HepG2 (cell line): ENCODE measurements at regions of chr3 and their contacts with region 1.

Region 1: GRCh38 chr3:185328324-185329004 is 34.5 kb upstream of the MAP3K13 start:
- DNase-seq: peak; percentile 94
- ATAC-seq: peak; percentile 96
- H3K4me3 ChIP-seq: peak overlapping the region; percentile 64 to 76 (median 68)
- H3K27ac ChIP-seq: peak overlapping the region; percentile 92
- H3K4me1 ChIP-seq: peaks cover 66% of the 10 kb centered on the region
- H3K27me3 ChIP-seq: no peaks in the 10 kb centered on the region
- CTCF ChIP-seq: no peak
- EP300 ChIP-seq: peak in 1 of 2 experiments; percentile 58; a peak in 1 of 4 replicates
- POLR2A ChIP-seq: peak; percentile 90 to 97
- RAD21 ChIP-seq: no peak

Region 2: DNA sequence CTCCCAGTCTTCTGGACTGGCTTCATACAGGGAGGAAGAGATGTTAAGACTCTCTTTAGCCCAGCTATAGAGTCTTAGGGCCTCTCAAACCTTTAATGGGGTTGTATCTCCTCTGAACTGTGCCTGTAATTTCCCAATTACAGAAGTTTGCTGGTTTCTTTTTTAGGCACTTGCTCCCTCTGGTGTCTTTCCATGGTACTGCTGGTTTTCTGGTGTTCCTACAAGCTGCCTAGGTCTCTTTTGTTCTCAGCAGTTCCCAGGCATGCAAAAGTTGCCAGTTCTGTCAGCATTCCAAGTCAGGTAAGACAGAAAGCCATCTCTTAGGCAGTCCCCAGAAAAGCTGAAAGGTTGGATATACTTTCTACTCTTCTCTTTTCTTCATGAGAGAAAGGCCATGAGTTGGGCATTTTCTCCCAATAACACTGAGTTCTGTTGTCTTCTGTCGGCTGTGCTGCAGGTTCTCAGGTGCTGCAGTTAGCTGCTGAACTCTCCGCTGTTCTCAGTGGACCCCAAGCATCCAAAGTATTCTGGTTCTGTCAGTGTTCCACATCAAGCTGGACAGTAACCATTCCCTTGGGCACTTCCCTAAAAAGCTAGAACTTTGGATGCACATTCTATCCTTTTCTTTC is 20.2 kb before region 1 on chr3:
- CTCF ChIA-PET with region 1: no interaction called
- POLR2A ChIA-PET with region 1: interaction called, 24 read pairs
- in situ Hi-C with region 1: no loop called
- intact Hi-C with region 1: no loop called
- DNase-seq: peak; percentile 71
- ATAC-seq: peak; percentile 78
- H3K4me3 ChIP-seq: no peak overlapping the region; a peak in 1 of 6 replicates
- H3K27ac ChIP-seq: peak overlapping the region; percentile 85
- H3K4me1 ChIP-seq: peaks cover 35% of the 10 kb centered on the region
- H3K27me3 ChIP-seq: no peaks in the 10 kb centered on the region
- CTCF ChIP-seq: peak; percentile 77
- EP300 ChIP-seq: no peak
- POLR2A ChIP-seq: no peak
- RAD21 ChIP-seq: peak; percentile 48; the same call in 1 of the 2 replicates

Region 3: GRCh38 chr3:185318141-185318540 is 10.3 kb before region 1 on chr3:
- CTCF ChIA-PET with region 1: no interaction called
- POLR2A ChIA-PET with region 1: interaction called, 10 read pairs
- in situ Hi-C with region 1: no loop called
- intact Hi-C with region 1: no loop called
- DNase-seq: peak; percentile 55
- ATAC-seq: peak; percentile 66
- H3K4me3 ChIP-seq: no peak overlapping the region
- H3K27ac ChIP-seq: peak overlapping the region; percentile 33
- H3K4me1 ChIP-seq: peaks cover 36% of the 10 kb centered on the region
- H3K27me3 ChIP-seq: no peaks in the 10 kb centered on the region
- CTCF ChIP-seq: no peak
- EP300 ChIP-seq: no peak
- POLR2A ChIP-seq: no peak
- RAD21 ChIP-seq: no peak